Caco-2 (cell line): ENCODE measurements at regions of chr6 and their contacts with region 1.

Region 1: DNA sequence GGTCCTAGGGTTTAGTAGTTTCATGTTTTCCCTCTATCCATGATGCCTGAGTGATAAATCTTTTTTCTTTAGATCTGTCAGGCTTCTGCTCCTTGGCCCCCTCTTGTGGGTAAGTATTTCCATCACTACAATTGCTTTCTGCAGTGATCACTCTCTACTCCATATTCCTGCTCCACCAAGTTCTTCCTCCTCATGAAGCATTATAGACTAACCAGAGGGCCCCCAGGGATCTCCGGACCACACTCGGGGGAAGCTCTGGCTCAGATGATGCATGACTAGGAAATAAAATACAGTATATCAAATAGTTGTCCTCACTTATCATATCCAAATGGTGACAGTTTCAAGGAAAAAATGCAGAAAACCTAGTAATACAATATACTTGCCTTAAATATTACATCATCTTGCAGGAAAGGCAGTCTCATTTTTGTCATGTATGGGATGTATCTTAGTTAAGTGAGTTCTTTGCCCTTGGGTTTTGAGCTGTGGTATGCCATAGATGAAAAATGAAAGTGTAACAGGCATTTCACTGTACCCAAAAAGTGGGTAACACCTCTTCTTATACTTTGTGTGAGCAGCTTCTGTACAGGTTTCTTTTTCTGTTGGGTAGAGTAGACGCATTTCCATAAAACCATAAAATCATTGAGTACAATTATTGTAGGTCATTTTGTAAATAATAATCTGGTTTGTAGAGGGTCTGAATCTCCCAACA is 200.9 kb upstream of the EYA4 start:
- DNase-seq: peak in 1 of 2 experiments; percentile 38
- H3K4me3 ChIP-seq: no peak overlapping the region
- H3K4me3 Mint-ChIP-seq: no peak overlapping the region
- H3K27ac Mint-ChIP-seq: no peak overlapping the region
- H3K4me1 ChIP-seq: no peaks in the 10 kb centered on the region
- H3K4me1 Mint-ChIP-seq: no peaks in the 10 kb centered on the region
- H3K27me3 ChIP-seq: no peaks in the 10 kb centered on the region
- H3K27me3 Mint-ChIP-seq: no peaks in the 10 kb centered on the region
- CTCF ChIP-seq: peak; percentile 27 to 55

Region 2: GRCh38 chr6:132962936-132963868 is 77.0 kb before region 1 on chr6:
- CTCF ChIA-PET with region 1: interaction called, 3 read pairs
- POLR2A ChIA-PET with region 1: no interaction called
- intact Hi-C with region 1: loop called (anchors 1 kb)
- DNase-seq: peak; percentile 69 to 81
- H3K4me3 ChIP-seq: no peak overlapping the region
- H3K4me3 Mint-ChIP-seq: no peak overlapping the region
- H3K27ac Mint-ChIP-seq: no peak overlapping the region
- H3K4me1 ChIP-seq: no peaks in the 10 kb centered on the region
- H3K4me1 Mint-ChIP-seq: no peaks in the 10 kb centered on the region
- H3K27me3 ChIP-seq: no peaks in the 10 kb centered on the region
- H3K27me3 Mint-ChIP-seq: peaks cover 6% of the 10 kb centered on the region
- CTCF ChIP-seq: peak; percentile 87 to 88